CD8-positive, alpha-beta T cell (primary cell): ENCODE measurements at regions of chr14 and their contacts with region 1.

Region 1: GRCh38 chr14:21039585-21040369 is 2.4 kb upstream of the RNASE7 start:
- DNase-seq: peak in 4 of 9 experiments; percentile 29 to 69 (median 58)
- ATAC-seq: peak; percentile 77
- H3K4me3 ChIP-seq: no peak overlapping the region
- H3K4me3 Mint-ChIP-seq: no peak overlapping the region
- H3K27ac ChIP-seq: no peak overlapping the region
- H3K27ac Mint-ChIP-seq: no peak overlapping the region
- H3K4me1 ChIP-seq: no peaks in the 10 kb centered on the region
- H3K4me1 Mint-ChIP-seq: peaks cover 7% of the 10 kb centered on the region
- H3K27me3 ChIP-seq: peaks cover 0 to 3% of the 10 kb centered on the region in 2 experiments
- H3K27me3 Mint-ChIP-seq: peaks cover 15% of the 10 kb centered on the region
- CTCF ChIP-seq: peak; percentile 46

Region 2: DNA sequence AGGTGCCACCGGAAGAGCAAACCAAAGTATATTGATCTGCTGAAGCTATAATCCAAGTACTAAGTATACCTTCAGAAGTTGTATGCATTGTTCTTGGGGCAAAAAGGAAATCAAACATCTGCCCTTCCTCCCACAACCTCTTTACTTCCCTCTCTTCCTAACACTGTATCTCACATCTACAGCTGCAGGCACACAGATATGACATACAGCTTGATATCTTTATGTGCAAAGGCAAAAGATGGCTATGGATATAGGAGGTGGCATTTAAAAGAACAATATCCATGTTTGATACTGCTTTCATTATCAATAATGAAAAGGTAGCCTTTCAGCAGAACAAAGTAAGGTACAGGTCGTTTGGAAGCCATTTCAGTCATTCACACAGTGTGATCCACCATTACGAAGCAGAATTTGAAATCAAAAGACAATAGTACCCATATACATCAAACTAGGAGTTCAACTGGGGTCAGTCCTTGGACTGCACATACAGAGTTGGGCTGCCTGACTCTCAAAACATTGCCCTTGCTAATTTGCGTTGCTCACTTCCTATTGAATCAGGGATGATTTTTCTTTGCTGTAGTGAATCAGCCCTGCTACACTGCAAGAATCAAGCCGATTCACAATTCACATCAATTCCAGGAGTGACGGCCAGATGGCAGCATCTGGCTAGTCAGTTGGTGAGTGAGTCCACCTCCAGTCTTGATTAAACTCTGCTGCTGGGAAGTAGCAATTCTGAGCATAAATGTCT is 342.3 kb before region 1 on chr14:
- CTCF ChIA-PET with region 1: no interaction called
- POLR2A ChIA-PET with region 1: no interaction called
- intact Hi-C with region 1: loop called in 1 of 2 experiments (anchors 2 kb)
- DNase-seq: peak; percentile 44 to 76 (median 60)
- ATAC-seq: peak; percentile 72
- H3K4me3 ChIP-seq: no peak overlapping the region
- H3K4me3 Mint-ChIP-seq: no peak overlapping the region
- H3K27ac ChIP-seq: no peak overlapping the region
- H3K27ac Mint-ChIP-seq: no peak overlapping the region
- H3K4me1 ChIP-seq: no peaks in the 10 kb centered on the region
- H3K4me1 Mint-ChIP-seq: no peaks in the 10 kb centered on the region
- H3K27me3 ChIP-seq: no peaks in the 10 kb centered on the region
- H3K27me3 Mint-ChIP-seq: no peaks in the 10 kb centered on the region
- CTCF ChIP-seq: peak; percentile 75

Region 3: GRCh38 chr14:20855652-20856291 is 184.0 kb before region 1 on chr14:
- CTCF ChIA-PET with region 1: no interaction called
- POLR2A ChIA-PET with region 1: no interaction called
- intact Hi-C with region 1: loop called (anchors 2 kb)
- DNase-seq: peak in 6 of 9 experiments; percentile 13 to 70 (median 28)
- ATAC-seq: peak; percentile 79
- H3K4me3 ChIP-seq: no peak overlapping the region
- H3K4me3 Mint-ChIP-seq: no peak overlapping the region
- H3K27ac ChIP-seq: no peak overlapping the region
- H3K27ac Mint-ChIP-seq: no peak overlapping the region
- H3K4me1 ChIP-seq: no peaks in the 10 kb centered on the region
- H3K4me1 Mint-ChIP-seq: peaks cover 5% of the 10 kb centered on the region
- H3K27me3 ChIP-seq: no peaks in the 10 kb centered on the region
- H3K27me3 Mint-ChIP-seq: peaks cover 22% of the 10 kb centered on the region
- CTCF ChIP-seq: peak; percentile 50

Region 4: DNA sequence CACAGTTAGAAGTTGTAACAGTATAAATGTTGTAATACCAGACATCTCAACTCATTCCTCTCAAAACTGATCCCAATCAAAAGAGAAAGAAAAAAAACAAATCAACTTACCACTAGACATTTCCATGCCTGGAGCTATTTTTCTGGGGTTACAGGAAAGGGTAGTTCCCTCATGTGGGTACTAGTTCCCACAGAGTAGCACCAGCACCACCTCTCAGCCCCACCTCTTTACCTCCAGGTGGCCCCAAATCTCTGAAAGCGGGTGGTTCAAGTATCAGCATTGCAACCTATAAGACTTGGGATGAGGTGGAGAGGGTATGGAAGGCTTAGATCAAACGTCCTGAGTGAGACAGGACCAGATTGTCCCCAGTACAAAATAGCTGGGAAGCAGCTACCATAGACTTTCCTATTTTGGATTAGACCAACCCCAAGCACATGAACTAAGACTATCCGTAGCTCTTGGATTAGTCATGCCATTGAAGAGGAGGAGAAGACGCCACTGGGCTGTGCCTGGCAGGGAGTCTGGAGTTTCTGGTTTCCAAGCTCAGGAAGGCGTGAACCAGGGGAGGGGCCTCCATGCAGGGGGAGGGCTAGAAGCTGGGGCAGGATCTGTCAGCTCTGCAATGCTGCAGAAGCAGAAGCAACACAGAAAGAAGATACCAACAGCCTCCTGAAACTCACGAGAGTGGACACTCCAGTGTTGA is 41.0 kb before region 1 on chr14 and contains the start of gene SLC39A2:
- CTCF ChIA-PET with region 1: interaction called, 14 read pairs
- POLR2A ChIA-PET with region 1: no interaction called
- intact Hi-C with region 1: no loop called
- DNase-seq: no peak
- ATAC-seq: no peak
- H3K4me3 ChIP-seq: no peak within 1 kb of the TSS
- H3K4me3 Mint-ChIP-seq: no peak within 1 kb of the TSS
- H3K27ac ChIP-seq: peak within 1 kb of the TSS in 1 of 2 experiments; percentile 13
- H3K27ac Mint-ChIP-seq: peak within 1 kb of the TSS; percentile 12
- H3K4me1 ChIP-seq: peaks cover 8% of the 10 kb centered on the region
- H3K4me1 Mint-ChIP-seq: peaks cover 22% of the 10 kb centered on the region
- H3K27me3 ChIP-seq: no peaks in the 10 kb centered on the region
- H3K27me3 Mint-ChIP-seq: no peaks in the 10 kb centered on the region
- CTCF ChIP-seq: no peak
- total RNA-seq, gene SLC39A2: 0.33 to 0.62 TPM

Region 5: GRCh38 chr14:21003788-21004346 is 35.9 kb before region 1 on chr14:
- CTCF ChIA-PET with region 1: interaction called, 416 read pairs
- POLR2A ChIA-PET with region 1: no interaction called
- intact Hi-C with region 1: no loop called
- DNase-seq: no peak
- ATAC-seq: no peak
- H3K4me3 ChIP-seq: no peak overlapping the region
- H3K4me3 Mint-ChIP-seq: no peak overlapping the region
- H3K27ac ChIP-seq: no peak overlapping the region
- H3K27ac Mint-ChIP-seq: no peak overlapping the region
- H3K4me1 ChIP-seq: no peaks in the 10 kb centered on the region
- H3K4me1 Mint-ChIP-seq: no peaks in the 10 kb centered on the region
- H3K27me3 ChIP-seq: no peaks in the 10 kb centered on the region
- H3K27me3 Mint-ChIP-seq: no peaks in the 10 kb centered on the region
- CTCF ChIP-seq: no peak

Region 6: DNA sequence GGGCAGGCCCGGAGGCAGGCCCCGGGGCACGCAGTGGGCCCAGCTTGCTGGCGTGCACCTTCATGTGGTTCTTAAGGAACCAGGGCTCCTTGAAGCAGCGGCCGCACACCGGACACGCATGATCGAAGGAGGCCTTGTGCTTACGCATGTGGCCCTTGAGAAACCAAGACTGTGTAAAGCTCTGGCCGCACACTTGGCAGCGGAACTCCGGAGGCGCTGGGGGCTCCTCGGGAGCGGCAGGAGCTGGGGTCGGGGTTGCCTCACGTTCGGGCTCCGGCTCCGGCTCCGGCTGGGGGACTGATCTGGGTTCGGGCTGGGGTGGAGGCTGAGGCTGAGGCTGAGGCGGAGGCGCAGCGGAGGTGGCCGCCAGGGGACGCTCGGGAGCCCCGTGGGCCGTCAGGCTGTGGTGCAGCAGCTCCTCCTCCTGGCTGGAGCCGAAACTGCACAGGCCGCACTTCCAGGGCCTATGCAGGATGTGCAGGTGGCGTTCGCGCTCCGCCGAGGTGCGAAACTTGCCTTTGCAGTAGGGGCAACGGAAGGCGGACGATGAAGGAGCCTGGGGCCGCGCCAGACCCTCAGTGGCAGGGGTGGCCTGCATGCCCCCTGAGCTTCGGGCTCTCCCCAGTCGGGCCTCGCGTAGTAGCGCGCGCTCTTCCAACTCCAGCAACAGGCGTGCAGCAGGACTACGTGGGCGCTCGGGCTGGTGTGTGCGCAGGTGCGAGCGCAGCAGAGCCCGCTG is 52.7 kb after region 1 on chr14:
- CTCF ChIA-PET with region 1: interaction called, 17 read pairs
- POLR2A ChIA-PET with region 1: no interaction called
- intact Hi-C with region 1: no loop called
- DNase-seq: peak; percentile 86 to 97 (median 92)
- ATAC-seq: peak; percentile 89
- H3K4me3 ChIP-seq: no peak overlapping the region
- H3K4me3 Mint-ChIP-seq: no peak overlapping the region
- H3K27ac ChIP-seq: no peak overlapping the region
- H3K27ac Mint-ChIP-seq: peak overlapping the region; percentile 71
- H3K4me1 ChIP-seq: peaks cover 18% of the 10 kb centered on the region
- H3K4me1 Mint-ChIP-seq: peaks cover 28% of the 10 kb centered on the region
- H3K27me3 ChIP-seq: no peaks in the 10 kb centered on the region
- H3K27me3 Mint-ChIP-seq: no peaks in the 10 kb centered on the region
- CTCF ChIP-seq: peak; percentile 100